ENCODE measurements at regions of chr16 and their contacts with region 1.

Region 1: DNA sequence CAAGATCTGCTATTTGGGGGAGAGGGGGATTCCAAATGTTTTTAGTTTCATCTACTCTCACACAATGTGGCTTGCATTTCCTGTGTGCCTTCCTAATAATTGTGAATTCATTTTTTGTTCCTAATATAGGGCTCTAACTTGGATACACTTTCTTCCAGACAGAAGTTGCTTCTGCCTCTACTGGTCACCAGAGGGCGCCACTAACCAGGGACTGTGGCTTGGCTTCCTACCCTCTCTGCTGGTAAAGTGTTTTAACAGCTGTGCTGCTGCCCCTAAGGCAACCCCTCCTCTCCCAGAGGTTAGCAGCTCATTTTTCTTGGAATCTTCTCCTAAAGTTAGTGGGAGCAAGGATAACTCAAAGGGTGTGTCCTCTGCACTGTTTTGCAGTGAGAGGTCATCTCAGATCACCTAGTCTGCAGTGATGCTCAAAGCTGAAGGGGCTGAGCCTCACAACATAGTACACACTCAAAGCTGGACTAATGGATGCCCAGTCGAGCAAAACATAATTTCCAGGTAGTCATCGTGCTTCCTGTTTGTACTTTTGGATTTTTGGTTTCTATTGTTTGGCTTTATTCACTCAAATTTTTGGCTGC is 5.0 kb upstream of the PRSS54 start:
- DNase-seq: peak; percentile 30 to 50 (median 44)
- ATAC-seq: peak; percentile 64; the same call in 2 of the 3 replicates
- H3K4me3 ChIP-seq: no peak overlapping the region
- H3K27ac ChIP-seq: no peak overlapping the region
- H3K4me1 ChIP-seq: no peaks in the 10 kb centered on the region
- H3K27me3 ChIP-seq: no peaks in the 10 kb centered on the region
- CTCF ChIP-seq: peak; percentile 56 to 74 (median 69)
- EP300 ChIP-seq: no peak
- POLR2A ChIP-seq: no peak
- RAD21 ChIP-seq: peak; percentile 5 to 59; a peak in 2 of 4 replicates

Region 2: DNA sequence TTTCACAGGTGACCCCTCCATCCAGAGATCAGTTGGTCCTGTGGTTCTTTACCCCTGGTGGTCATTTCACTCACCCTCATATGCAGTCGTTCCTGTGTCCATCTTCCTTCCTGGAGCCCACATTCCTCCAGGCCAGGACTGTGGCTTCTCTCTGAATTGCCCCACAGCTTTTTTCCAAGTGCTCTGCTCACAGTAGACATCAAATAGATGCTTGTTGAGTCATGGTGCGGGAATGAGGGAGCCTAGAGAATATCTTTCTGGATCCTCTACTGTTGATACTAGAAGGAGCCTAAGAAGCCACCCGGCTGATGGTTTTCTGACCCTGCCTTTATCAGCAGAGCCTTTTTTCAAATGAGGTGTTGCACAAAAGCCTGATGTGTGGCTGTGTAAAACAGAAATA is 288.2 kb before region 1 on chr16:
- CTCF ChIA-PET with region 1: no interaction called
- POLR2A ChIA-PET with region 1: no interaction called
- in situ Hi-C with region 1: loop called (anchors 10 kb)
- intact Hi-C with region 1: no loop called
- DNase-seq: no peak
- ATAC-seq: no peak
- H3K4me3 ChIP-seq: no peak overlapping the region
- H3K27ac ChIP-seq: no peak overlapping the region
- H3K4me1 ChIP-seq: no peaks in the 10 kb centered on the region
- H3K27me3 ChIP-seq: no peaks in the 10 kb centered on the region
- CTCF ChIP-seq: no peak
- EP300 ChIP-seq: no peak
- POLR2A ChIP-seq: no peak
- RAD21 ChIP-seq: no peak